ENCODE measurements at regions of chr12 and their contacts with region 1.

Region 1: GRCh38 chr12:6323340-6323994 is 13.0 kb downstream of the PLEKHG6 start:
- DNase-seq: peak in 1 of 5 donors; percentile 61
- H3K4me3 ChIP-seq: no peak overlapping the region
- H3K27ac ChIP-seq: no peak overlapping the region
- H3K4me1 ChIP-seq: peaks cover 13% of the 10 kb centered on the region
- H3K27me3 ChIP-seq: no peaks in the 10 kb centered on the region
- CTCF ChIP-seq: peak in 1 of 3 donors; percentile 54
- EP300 ChIP-seq: no peak
- POLR2A ChIP-seq: no peak

Region 2: DNA sequence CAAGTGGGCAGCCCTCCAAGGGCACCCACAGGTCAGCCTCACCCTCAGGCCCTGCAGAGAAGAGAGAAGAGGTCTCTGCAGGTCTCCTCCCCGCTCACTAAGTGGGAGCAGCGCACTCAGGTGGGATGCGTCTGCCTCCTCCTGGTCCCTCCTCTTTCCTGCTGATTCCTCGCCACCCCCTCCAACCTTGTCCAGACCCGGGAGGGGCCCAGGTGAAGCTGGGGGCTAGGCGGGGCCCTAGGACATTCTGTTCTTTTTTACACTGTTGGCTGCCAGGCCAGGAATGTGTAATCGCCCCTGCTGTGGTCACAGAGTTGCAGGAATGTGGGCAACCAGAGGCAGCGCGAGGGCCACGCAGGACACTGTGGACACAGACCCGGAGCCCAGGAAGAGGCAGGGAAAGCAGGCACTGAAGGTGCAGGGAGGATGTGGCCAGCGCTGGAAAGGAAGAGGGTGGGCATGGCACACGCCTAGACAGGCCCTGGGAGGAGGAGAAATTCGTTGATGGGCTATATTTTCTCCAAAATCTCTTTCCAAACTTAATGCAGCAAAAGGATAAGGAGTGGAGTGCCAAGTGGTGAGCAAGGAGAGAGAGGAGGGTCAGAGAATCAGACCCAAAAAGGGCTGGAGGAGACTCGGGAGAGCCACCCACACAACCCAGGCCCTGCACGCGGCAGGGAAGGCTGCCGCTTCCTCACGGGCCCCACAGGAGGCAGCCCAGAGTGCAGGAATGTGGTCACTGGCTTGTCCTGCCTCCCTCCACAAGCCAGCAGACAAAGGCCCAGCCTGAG is 52.8 kb after region 1 on chr12:
- intact Hi-C with region 1: loop called in 1 of 4 experiments (anchors 5 kb)
- DNase-seq: peak in 4 of 5 donors; percentile 61 to 76 (median 62)
- H3K4me3 ChIP-seq: no peak overlapping the region
- H3K27ac ChIP-seq: peak overlapping the region; percentile 27 to 70
- H3K4me1 ChIP-seq: peaks cover 17% of the 10 kb centered on the region
- H3K27me3 ChIP-seq: no peaks in the 10 kb centered on the region
- CTCF ChIP-seq: peak in 2 of 3 donors; percentile 29 to 34
- EP300 ChIP-seq: peak; percentile 35
- POLR2A ChIP-seq: no peak

Region 3: DNA sequence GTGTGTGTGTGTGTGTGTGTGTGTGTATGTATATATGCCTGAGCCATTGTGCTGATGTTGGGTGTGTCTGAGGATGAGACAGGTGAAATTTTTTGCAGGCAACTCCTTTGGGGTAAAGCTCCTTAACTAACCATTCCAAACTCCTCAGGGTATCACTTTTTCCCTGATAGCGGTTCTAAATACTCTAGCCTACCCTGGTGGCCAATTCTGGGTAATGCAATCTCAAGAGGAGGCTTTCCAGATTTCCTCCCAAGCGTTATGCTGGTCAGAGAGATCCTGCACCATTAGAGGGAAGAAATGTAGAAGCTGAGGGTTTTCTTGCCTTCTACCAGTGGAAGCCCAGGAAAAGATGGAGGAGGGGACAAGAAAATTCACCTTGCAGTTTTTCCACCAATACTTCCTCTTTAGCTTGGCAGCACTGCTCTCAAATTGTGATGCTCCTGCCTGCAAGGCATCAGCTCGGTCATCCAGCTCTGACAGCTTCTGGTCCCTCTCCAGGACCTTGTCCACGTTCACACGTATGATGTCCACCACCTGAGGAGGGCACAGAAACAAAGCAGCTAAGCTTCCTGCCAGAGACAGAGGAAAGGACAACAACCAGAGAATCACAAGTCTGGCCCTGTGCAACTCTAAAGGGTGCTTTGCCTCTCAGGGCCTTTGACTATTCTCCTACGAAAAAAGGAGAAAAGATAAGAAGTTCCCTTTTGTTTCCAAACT is 142.2 kb after region 1 on chr12:
- intact Hi-C with region 1: loop called (anchors 5 to 10 kb)
- DNase-seq: peak in 3 of 5 donors; percentile 31 to 68 (median 47)
- H3K4me3 ChIP-seq: no peak overlapping the region
- H3K27ac ChIP-seq: no peak overlapping the region
- H3K4me1 ChIP-seq: peaks cover 3% of the 10 kb centered on the region
- H3K27me3 ChIP-seq: no peaks in the 10 kb centered on the region
- CTCF ChIP-seq: peak; percentile 69 to 87 (median 84)
- EP300 ChIP-seq: no peak
- POLR2A ChIP-seq: no peak

Region 4: GRCh38 chr12:6533923-6534694 is 210.6 kb after region 1 on chr12 and contains the start of gene GAPDH:
- intact Hi-C with region 1: loop called in 2 of 4 experiments (anchors 5 to 10 kb)
- DNase-seq: peak; percentile 91 to 94 (median 93)
- H3K4me3 ChIP-seq: peak within 1 kb of the TSS; percentile 62
- H3K27ac ChIP-seq: peak within 1 kb of the TSS; percentile 93 to 96
- H3K4me1 ChIP-seq: peaks cover 14% of the 10 kb centered on the region
- H3K27me3 ChIP-seq: no peaks in the 10 kb centered on the region
- CTCF ChIP-seq: peak in 1 of 3 donors; percentile 37
- EP300 ChIP-seq: no peak
- POLR2A ChIP-seq: peak; percentile 97
- total RNA-seq, gene GAPDH: 661 to 1,442 (median 1,249) TPM

Measured in ovary (tissue), 10 donors.